ENCODE measurements at regions of chr11 and their contacts with region 1.

Region 1: GRCh38 chr11:207208-207862 is at the starts of genes BET1L and RIC8A:
- DNase-seq: peak; percentile 94
- ATAC-seq: peak; percentile 81
- H3K4me3 ChIP-seq: peak within 1 kb of the TSS; percentile 84
- H3K27ac ChIP-seq: peak within 1 kb of the TSS; percentile 97
- H3K4me1 ChIP-seq: peaks cover 27% of the 10 kb centered on the region
- H3K27me3 ChIP-seq: no peaks in the 10 kb centered on the region
- CTCF ChIP-seq: no peak
- EP300 ChIP-seq: no peak; a peak in 1 of 4 replicates
- POLR2A ChIP-seq: peak; percentile 97
- RAD21 ChIP-seq: no peak
- polyA plus RNA-seq, gene BET1L: 6.7 to 12.4 TPM
- polyA plus RNA-seq, gene RIC8A: 10.4 to 12.4 TPM

Region 2: DNA sequence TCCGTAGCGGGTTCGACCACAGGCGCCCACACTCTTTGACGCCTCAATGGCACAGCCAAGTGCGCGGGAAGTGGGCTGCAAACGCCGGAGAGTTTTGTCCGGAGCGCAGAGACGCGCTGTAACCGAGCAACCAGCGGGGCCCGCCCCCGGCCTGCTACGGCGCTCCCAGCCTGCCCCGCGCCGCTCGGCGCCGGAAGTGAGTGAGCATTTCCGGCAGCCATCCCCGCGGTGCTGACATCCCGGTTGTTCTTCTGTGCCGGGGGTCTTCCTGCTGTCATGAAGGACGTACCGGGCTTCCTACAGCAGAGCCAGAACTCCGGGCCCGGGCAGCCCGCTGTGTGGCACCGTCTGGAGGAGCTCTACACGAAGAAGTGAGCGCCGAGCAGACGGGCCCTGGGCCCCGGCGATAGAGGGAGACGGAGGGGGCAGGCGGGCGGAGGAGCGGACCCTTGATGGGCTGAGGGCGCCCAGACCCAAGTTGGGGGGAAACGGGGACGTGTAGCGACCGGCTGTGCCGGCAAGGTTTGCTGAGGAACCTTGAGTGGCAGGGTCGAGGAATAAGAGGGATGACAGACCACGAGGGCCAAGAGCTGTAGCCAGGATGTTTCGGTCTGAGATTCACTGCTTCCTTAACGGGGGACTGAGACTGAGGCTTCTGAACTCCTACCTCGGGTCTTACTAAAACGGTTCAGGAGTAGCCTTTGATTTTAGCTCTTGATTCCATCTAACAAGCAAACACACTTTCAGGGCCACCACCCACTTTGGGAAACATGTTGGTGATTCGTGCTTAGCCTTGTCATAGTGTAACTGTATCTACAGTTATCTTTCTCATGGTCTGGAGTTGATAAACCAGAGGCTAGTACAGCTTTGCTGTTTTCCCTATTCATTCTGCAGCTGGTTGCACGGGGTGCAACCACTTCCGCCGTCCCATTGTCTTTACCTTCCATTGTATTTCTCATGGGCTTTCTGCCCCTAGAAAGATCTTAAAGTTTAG is 29.7 kb after region 1 on chr11 and contains the start of gene PSMD13:
- CTCF ChIA-PET with region 1: interaction called, 6 read pairs
- POLR2A ChIA-PET with region 1: interaction called, 27 read pairs
- RAD21 ChIA-PET with region 1: interaction called, 15 read pairs
- SMC1A ChIA-PET with region 1: interaction called, 12 read pairs
- in situ Hi-C with region 1: no loop called
- intact Hi-C with region 1: loop called (anchors 1 kb)
- DNase-seq: no peak
- ATAC-seq: peak; percentile 95
- H3K4me3 ChIP-seq: peak within 1 kb of the TSS; percentile 80
- H3K27ac ChIP-seq: peak within 1 kb of the TSS; percentile 86
- H3K4me1 ChIP-seq: no peaks in the 10 kb centered on the region
- H3K27me3 ChIP-seq: no peaks in the 10 kb centered on the region
- CTCF ChIP-seq: no peak
- EP300 ChIP-seq: no peak
- POLR2A ChIP-seq: peak; percentile 81
- RAD21 ChIP-seq: no peak
- polyA plus RNA-seq, gene PSMD13: 198 to 221 TPM

Region 3: DNA sequence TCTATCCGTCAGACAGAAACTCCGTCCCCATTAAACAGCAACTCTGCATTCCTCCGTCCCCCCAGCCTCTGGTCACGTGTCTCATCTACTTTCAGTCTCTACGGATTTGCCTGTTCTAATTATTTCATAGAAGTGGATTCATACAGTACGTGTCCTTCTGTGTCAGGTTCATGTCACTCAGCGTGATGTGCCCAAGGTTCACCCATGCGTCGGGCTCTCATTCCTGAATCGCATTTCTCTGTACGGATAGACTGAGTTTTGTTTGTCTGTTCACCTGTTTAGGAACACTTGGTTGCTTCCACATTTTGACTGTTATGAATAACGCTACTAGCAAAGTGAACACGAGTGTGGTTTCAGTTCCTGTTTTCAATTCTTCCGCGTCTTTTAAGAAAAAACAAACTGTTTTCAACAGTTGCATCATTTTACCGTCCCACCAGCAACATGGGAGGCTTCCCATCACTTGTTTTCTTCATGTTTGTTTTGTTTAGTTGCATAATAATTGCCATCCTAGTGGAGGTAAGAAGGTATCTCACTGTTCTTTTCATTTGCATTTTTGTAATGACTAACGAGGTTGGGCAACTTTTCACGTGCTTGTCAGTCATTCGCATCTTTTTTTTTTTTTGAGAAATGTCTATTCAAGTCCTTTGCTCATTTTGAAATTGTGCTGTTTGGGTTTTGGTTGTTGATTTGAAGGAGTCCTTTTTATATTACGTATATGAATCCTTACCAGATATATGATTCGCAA is 62.0 kb after region 1 on chr11:
- CTCF ChIA-PET with region 1: no interaction called
- POLR2A ChIA-PET with region 1: interaction called, 13 read pairs
- RAD21 ChIA-PET with region 1: interaction called, 9 read pairs
- SMC1A ChIA-PET with region 1: interaction called, 8 read pairs
- in situ Hi-C with region 1: no loop called
- intact Hi-C with region 1: loop called (anchors 1 kb)
- DNase-seq: peak; percentile 99
- ATAC-seq: peak; percentile 80
- H3K4me3 ChIP-seq: peak overlapping the region; percentile 78
- H3K27ac ChIP-seq: peak overlapping the region; percentile 88
- H3K4me1 ChIP-seq: peaks cover 14% of the 10 kb centered on the region
- H3K27me3 ChIP-seq: no peaks in the 10 kb centered on the region
- CTCF ChIP-seq: no peak
- EP300 ChIP-seq: peak; percentile 98 to 99
- POLR2A ChIP-seq: no peak; the same call in 1 of the 2 replicates
- RAD21 ChIP-seq: no peak

Region 4: GRCh38 chr11:363948-364761 is 156.8 kb after region 1 on chr11:
- CTCF ChIA-PET with region 1: interaction called, 3 read pairs
- POLR2A ChIA-PET with region 1: no interaction called
- RAD21 ChIA-PET with region 1: no interaction called
- SMC1A ChIA-PET with region 1: no interaction called
- in situ Hi-C with region 1: loop called (anchors 10 kb)
- intact Hi-C with region 1: loop called (anchors 5 kb)
- DNase-seq: no peak
- ATAC-seq: peak; percentile 98
- H3K4me3 ChIP-seq: no peak overlapping the region
- H3K27ac ChIP-seq: no peak overlapping the region
- H3K4me1 ChIP-seq: no peaks in the 10 kb centered on the region
- H3K27me3 ChIP-seq: peaks cover 4 to 5% of the 10 kb centered on the region in 2 experiments; a peak in 3 of 4 replicates
- CTCF ChIP-seq: peak; percentile 52 to 73 (median 53); a peak in 5 of 6 replicates
- EP300 ChIP-seq: no peak
- POLR2A ChIP-seq: no peak
- RAD21 ChIP-seq: peak; percentile 39

Region 5: DNA sequence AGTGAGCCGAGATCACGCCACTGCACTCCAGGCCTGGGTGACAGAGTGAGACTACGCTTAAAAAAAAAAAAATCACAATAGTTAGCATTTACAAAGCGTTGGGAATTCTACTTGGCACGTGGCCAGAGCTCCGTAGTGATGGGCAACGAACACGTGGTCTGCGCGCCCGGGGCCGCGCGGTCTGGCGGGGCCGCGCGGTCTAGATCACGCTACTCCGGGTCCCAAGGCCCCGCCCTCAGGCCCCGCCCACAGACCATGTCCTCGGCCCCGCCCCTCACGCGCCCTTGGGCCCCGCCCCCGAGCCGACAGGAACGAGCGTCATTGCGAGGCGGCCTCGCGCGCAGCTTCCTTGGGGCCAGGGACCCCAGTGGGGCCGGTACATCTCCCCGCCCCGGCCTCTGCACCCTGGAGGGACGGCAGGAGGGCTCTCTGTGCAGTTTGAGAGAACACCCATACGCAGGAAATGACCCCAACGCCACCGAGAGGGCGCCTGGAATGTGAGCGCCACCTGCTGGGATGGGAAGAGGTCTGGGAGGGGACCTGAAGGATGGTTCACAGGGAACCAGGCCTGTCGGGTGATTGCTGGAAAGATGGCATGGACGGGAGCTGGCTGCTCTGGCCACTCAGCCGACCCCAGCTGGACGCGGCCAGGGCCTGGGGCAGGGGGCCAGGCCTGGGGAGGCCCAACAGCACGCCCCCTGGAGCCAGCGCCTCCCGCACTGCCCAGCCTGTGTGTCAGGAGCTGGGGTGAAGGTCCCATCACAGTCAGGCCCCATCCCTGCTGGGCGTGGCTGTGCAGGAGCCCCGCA is 240.8 kb after region 1 on chr11:
- CTCF ChIA-PET with region 1: no interaction called
- POLR2A ChIA-PET with region 1: interaction called, 4 read pairs
- RAD21 ChIA-PET with region 1: interaction called, 3 read pairs
- SMC1A ChIA-PET with region 1: no interaction called
- in situ Hi-C with region 1: no loop called
- intact Hi-C with region 1: loop called (anchors 10 kb)
- DNase-seq: peak; percentile 54
- ATAC-seq: peak; percentile 79
- H3K4me3 ChIP-seq: peak overlapping the region; percentile 82
- H3K27ac ChIP-seq: peak overlapping the region; percentile 84
- H3K4me1 ChIP-seq: peaks cover 15% of the 10 kb centered on the region
- H3K27me3 ChIP-seq: no peaks in the 10 kb centered on the region
- CTCF ChIP-seq: peak; percentile 83 to 87 (median 87)
- EP300 ChIP-seq: no peak
- POLR2A ChIP-seq: peak; percentile 89
- RAD21 ChIP-seq: peak; percentile 79

Region 6: DNA sequence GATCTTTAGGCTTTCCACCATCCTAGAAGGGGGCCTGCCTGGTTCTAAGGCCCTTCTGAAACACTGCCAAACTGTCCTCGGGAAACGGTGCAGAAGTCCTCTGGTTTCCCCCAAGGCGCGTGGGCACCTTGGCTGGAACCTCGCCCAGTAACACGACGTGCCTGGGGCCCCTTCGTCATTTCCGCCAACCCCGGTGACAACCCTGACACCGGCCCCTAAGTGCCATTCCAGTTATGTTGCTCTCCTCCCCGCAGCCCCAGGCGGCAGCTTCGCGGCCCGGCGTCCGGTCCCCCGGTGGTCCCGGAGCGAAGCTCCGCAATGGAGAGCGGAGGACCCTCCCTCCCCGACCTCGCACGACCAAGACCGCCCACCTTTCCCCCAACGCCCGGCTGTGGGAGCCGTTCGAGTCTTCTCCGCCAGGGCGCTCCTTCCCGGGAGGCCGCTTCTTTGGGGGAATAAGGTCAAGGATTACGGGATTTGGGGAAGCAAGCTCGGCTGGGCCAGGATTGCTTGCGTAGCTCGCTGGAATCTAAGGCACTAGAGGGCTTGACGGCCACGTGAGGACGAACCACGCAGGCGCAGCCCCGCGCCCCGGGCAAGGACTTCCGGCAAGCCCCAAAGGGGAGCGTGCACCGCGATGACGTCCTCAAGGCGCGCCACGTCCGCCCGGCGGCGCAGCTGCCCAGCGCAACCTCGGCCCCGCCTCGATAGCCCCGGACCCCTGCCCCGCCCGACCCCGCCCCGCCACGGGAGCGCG is 299.1 kb after region 1 on chr11:
- CTCF ChIA-PET with region 1: no interaction called
- POLR2A ChIA-PET with region 1: interaction called, 7 read pairs
- RAD21 ChIA-PET with region 1: no interaction called
- SMC1A ChIA-PET with region 1: no interaction called
- in situ Hi-C with region 1: loop called (anchors 5 kb)
- intact Hi-C with region 1: no loop called
- DNase-seq: peak; percentile 83
- ATAC-seq: peak; percentile 76
- H3K4me3 ChIP-seq: peak overlapping the region; percentile 89
- H3K27ac ChIP-seq: peak overlapping the region; percentile 100
- H3K4me1 ChIP-seq: peaks cover 18% of the 10 kb centered on the region
- H3K27me3 ChIP-seq: no peaks in the 10 kb centered on the region
- CTCF ChIP-seq: no peak
- EP300 ChIP-seq: no peak
- POLR2A ChIP-seq: peak; percentile 80
- RAD21 ChIP-seq: no peak

Region 7: GRCh38 chr11:541414-541885 is 334.1 kb after region 1 on chr11:
- CTCF ChIA-PET with region 1: no interaction called
- POLR2A ChIA-PET with region 1: no interaction called
- RAD21 ChIA-PET with region 1: no interaction called
- SMC1A ChIA-PET with region 1: no interaction called
- in situ Hi-C with region 1: no loop called
- intact Hi-C with region 1: no loop called
- DNase-seq: no peak
- ATAC-seq: no peak
- H3K4me3 ChIP-seq: no peak overlapping the region
- H3K27ac ChIP-seq: no peak overlapping the region
- H3K4me1 ChIP-seq: peaks cover 20% of the 10 kb centered on the region
- H3K27me3 ChIP-seq: no peaks in the 10 kb centered on the region
- CTCF ChIP-seq: no peak
- EP300 ChIP-seq: no peak
- POLR2A ChIP-seq: no peak
- RAD21 ChIP-seq: no peak

Measured in GM12878 (cell line).